ENCODE measurements at regions of chr10 and their contacts with region 1.

Region 1: GRCh38 chr10:110137142-110137545 is 70.3 kb upstream of the MXI1 start:
- DNase-seq: no peak
- H3K4me3 ChIP-seq: no peak overlapping the region
- H3K27ac ChIP-seq: no peak overlapping the region
- H3K4me1 ChIP-seq: 0 out of 7 replicates have a peak, but pooled peaks cover 0 to 2% (median 0%) of the 10 kb centered on the region in 4 experiments
- H3K27me3 ChIP-seq: no peaks in the 10 kb centered on the region
- CTCF ChIP-seq: peak in 2 of 3 experiments; percentile 71 to 88; a peak in 2 of 4 replicates
- EP300 ChIP-seq: no peak
- POLR2A ChIP-seq: no peak
- RAD21 ChIP-seq: peak; percentile 86 to 87

Region 2: GRCh38 chr10:110081911-110082310 is 55.2 kb before region 1 on chr10:
- CTCF ChIA-PET with region 1: no interaction called
- POLR2A ChIA-PET with region 1: no interaction called
- DNase-seq: no peak
- H3K4me3 ChIP-seq: no peak overlapping the region
- H3K27ac ChIP-seq: no peak overlapping the region
- H3K4me1 ChIP-seq: peaks cover 0 to 7% (median 5%) of the 10 kb centered on the region in 4 experiments; a peak in 4 of 7 replicates
- H3K27me3 ChIP-seq: no peaks in the 10 kb centered on the region; a peak in 1 of 7 replicates
- CTCF ChIP-seq: no peak
- EP300 ChIP-seq: no peak
- POLR2A ChIP-seq: no peak
- RAD21 ChIP-seq: no peak

Region 3: GRCh38 chr10:110151467-110151866 is 14.3 kb after region 1 on chr10:
- CTCF ChIA-PET with region 1: interaction called, 52 read pairs
- POLR2A ChIA-PET with region 1: no interaction called
- DNase-seq: peak in 1 of 2 experiments; percentile 43
- H3K4me3 ChIP-seq: no peak overlapping the region
- H3K27ac ChIP-seq: no peak overlapping the region
- H3K4me1 ChIP-seq: no peaks in the 10 kb centered on the region; a peak in 3 of 7 replicates
- H3K27me3 ChIP-seq: no peaks in the 10 kb centered on the region; a peak in 2 of 7 replicates
- CTCF ChIP-seq: no peak
- EP300 ChIP-seq: no peak
- POLR2A ChIP-seq: no peak
- RAD21 ChIP-seq: no peak

Region 4: DNA sequence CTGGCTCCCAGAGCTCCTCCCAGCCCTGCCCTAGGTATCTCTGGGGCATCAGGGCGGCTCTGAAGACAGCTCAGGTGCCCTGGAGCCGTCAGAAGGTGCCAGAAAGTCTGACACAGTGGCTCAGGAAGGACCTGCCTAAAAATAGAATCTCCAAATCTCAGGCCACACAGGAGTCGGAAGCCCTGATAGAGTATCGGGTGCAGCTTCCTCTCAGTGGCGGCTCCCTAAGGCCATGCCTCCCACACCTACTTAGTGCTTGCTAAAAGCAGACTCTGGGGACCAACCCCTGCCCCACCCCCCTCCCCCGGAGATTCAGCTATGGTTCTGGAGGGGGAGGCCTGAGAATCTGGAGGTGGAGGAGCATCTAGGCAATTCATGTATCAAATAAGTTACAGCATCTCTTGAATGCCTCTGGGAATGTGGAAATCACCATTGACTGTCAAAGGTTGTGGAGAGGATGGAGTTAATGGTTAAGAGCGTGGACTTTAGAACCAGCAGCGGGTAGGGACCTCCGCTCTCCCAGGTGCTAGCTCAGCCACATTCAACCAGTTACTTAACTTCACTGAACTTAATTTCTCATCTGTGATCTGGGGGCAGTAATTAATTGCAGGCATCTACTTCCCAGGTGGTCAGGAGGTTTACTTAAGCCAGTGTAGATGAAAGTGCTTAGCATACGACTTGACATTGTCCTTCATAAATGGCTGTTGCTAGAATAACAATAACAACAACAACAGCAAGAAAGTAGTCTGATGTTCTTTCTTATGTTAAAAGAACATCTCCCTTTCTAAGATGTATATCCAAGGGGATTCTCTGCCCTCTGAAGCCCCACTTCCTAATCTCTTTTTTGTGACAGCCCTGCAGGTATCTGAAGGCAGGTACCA is 31.7 kb after region 1 on chr10:
- CTCF ChIA-PET with region 1: interaction called, 39 read pairs
- POLR2A ChIA-PET with region 1: no interaction called
- DNase-seq: peak; percentile 47 to 51
- H3K4me3 ChIP-seq: no peak overlapping the region
- H3K27ac ChIP-seq: no peak overlapping the region
- H3K4me1 ChIP-seq: peaks cover 0 to 21% (median 8%) of the 10 kb centered on the region in 4 experiments; a peak in 6 of 7 replicates
- H3K27me3 ChIP-seq: peaks cover 69 to 99% (median 94%) of the 10 kb centered on the region in 4 experiments
- CTCF ChIP-seq: no peak
- EP300 ChIP-seq: peak in 1 of 2 experiments; percentile 87; a peak in 1 of 3 replicates
- POLR2A ChIP-seq: no peak
- RAD21 ChIP-seq: no peak

Region 5: DNA sequence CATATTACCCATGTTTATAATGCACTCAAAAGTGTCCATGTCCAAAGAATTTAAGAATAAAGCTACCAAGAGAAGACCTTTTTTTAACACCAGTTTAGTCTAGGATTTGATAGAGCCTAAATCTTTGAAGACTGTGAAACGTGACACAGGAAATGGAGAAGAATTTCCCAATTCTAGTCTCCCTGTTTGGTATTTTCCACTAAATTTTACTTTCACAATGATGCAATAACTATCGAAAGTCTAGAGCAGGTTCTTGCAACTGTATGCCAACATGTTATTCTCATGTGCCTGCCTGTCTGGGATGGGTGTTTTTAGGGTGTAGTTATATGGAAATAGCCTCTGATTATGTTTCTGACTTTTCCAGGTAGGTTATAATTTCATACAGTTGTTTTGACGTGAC is 63.4 kb after region 1 on chr10:
- CTCF ChIA-PET with region 1: interaction called, 44 read pairs
- POLR2A ChIA-PET with region 1: no interaction called
- DNase-seq: no peak
- H3K4me3 ChIP-seq: no peak overlapping the region
- H3K27ac ChIP-seq: no peak overlapping the region
- H3K4me1 ChIP-seq: peaks cover 0 to 4% (median 2%) of the 10 kb centered on the region in 4 experiments; a peak in 6 of 7 replicates
- H3K27me3 ChIP-seq: peaks cover 2 to 22% (median 9%) of the 10 kb centered on the region in 4 experiments
- CTCF ChIP-seq: no peak
- EP300 ChIP-seq: no peak
- POLR2A ChIP-seq: no peak
- RAD21 ChIP-seq: no peak

Region 6: DNA sequence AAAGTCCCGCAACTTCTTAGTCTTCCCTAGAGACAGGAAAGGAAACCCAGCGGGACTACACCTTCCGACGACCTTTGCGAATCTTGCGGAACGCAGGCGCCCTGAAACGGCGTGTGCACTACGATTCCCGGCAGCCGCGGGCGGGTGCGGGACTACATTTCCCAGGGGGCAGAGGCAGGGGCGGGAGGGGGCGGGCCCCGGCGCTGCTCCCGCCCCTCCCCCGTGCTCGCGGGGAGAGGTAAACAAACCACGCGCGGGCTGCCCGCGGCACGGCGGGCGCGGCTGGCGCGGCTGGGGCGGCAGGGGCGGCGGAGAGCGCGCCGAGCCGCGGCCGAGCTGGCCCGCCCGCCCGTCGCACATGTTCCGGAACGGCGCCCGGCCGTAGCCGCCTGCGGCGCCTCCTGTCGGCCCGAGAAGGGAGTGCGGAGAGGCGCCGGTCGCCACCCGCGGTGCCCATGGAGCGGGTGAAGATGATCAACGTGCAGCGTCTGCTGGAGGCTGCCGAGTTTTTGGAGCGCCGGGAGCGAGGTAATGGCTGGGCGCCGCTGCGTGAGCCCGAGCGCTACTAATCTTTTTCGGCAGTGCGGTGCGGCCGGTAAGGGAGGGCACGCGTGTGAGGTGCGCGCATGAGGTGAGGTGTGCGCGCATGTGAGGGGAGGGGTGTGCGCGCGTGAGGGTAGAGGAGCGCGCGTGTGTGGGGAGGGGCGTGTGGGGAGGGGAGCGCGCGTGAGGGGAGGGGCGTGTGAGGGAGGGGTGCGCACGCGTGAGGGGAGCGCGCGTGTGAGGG is 88.8 kb after region 1 on chr10:
- CTCF ChIA-PET with region 1: interaction called, 173 read pairs
- POLR2A ChIA-PET with region 1: no interaction called
- DNase-seq: peak; percentile 79 to 95
- H3K4me3 ChIP-seq: peak overlapping the region; percentile 61 to 86 (median 66)
- H3K27ac ChIP-seq: no peak overlapping the region; the same call in 1 of the 2 replicates
- H3K4me1 ChIP-seq: peaks cover 0 to 13% (median 6%) of the 10 kb centered on the region in 4 experiments; a peak in 6 of 7 replicates
- H3K27me3 ChIP-seq: peaks cover 0 to 2% (median 0%) of the 10 kb centered on the region in 4 experiments; a peak in 1 of 7 replicates
- CTCF ChIP-seq: peak; percentile 67 to 79 (median 70)
- EP300 ChIP-seq: no peak
- POLR2A ChIP-seq: no peak
- RAD21 ChIP-seq: peak; percentile 36 to 56

Region 7: DNA sequence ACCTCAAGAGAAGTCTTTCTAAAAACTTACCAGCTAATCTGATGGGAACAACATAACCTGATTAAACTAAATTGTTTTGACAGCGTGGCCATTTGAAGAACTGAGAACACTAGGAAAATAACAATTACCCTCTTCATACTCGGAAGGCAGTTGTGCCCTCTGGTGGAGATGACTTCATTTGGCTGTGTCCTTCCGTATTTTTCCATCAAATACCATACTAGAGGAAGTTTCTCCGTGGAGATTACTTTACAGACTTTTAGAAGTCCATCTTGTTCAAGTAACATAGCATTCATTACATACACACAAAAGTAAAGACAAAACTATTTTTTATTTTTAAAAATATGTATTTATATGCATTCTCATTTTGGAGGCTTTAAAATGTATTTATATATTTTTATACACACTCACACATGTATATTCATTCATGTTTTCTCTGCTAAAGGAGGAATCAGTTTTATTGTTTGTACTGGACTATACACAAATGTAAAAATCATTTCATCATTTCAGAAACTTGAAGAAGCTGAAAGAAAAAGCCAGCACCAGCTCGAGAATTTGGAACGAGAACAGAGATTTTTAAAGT is 142.4 kb after region 1 on chr10:
- CTCF ChIA-PET with region 1: interaction called, 34 read pairs
- POLR2A ChIA-PET with region 1: no interaction called
- DNase-seq: no peak
- H3K4me3 ChIP-seq: no peak overlapping the region
- H3K27ac ChIP-seq: no peak overlapping the region
- H3K4me1 ChIP-seq: no peaks in the 10 kb centered on the region
- H3K27me3 ChIP-seq: no peaks in the 10 kb centered on the region
- CTCF ChIP-seq: peak in 2 of 3 experiments; percentile 70 to 72; a peak in 3 of 4 replicates
- EP300 ChIP-seq: no peak
- POLR2A ChIP-seq: no peak
- RAD21 ChIP-seq: peak; percentile 83 to 86

Region 8: DNA sequence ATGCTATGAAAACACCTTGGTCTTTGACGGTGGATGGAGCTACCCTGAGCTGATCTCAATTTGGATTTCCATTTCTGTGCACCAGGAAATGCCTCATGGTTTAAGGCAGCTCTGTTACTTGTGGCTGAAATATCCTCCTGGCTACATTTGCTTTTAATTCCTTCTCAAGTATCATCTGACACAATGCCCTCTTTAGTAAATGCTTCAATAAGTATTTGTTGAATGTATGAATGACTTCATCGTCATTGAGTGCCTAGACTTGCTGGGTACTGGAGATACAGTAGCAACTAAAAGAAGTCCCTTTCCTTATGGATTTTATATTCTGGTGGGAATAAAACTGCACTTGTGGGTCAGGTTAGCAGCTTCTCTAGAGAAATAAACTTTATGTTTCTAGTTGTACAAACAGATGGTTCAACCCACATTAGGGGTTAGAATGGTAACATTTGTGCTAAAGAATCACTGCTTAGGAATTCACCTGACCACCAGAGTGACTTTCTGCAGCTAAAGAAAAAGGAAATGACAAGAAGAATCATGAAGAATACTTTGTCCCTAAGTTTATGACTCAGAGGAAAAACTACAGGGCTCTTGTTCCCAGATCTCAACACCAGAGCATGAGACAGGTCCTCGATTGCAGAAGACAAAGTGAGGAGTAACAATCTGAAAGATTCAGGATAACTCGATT is 189.3 kb after region 1 on chr10:
- CTCF ChIA-PET with region 1: no interaction called
- POLR2A ChIA-PET with region 1: no interaction called
- DNase-seq: no peak
- H3K4me3 ChIP-seq: no peak overlapping the region
- H3K27ac ChIP-seq: no peak overlapping the region
- H3K4me1 ChIP-seq: no peaks in the 10 kb centered on the region
- H3K27me3 ChIP-seq: no peaks in the 10 kb centered on the region
- CTCF ChIP-seq: no peak
- EP300 ChIP-seq: no peak
- POLR2A ChIP-seq: no peak
- RAD21 ChIP-seq: no peak